HEK293 (cell line): ENCODE measurements at regions of chr4 and their contacts with region 1.

Region 1: GRCh38 chr4:8688041-8688937 is 95.7 kb downstream of the CPZ start:
- H3K4me3 ChIP-seq: no peak overlapping the region
- H3K27ac ChIP-seq: no peak overlapping the region
- H3K4me1 ChIP-seq: no peaks in the 10 kb centered on the region
- CTCF ChIP-seq: no peak

Region 2: DNA sequence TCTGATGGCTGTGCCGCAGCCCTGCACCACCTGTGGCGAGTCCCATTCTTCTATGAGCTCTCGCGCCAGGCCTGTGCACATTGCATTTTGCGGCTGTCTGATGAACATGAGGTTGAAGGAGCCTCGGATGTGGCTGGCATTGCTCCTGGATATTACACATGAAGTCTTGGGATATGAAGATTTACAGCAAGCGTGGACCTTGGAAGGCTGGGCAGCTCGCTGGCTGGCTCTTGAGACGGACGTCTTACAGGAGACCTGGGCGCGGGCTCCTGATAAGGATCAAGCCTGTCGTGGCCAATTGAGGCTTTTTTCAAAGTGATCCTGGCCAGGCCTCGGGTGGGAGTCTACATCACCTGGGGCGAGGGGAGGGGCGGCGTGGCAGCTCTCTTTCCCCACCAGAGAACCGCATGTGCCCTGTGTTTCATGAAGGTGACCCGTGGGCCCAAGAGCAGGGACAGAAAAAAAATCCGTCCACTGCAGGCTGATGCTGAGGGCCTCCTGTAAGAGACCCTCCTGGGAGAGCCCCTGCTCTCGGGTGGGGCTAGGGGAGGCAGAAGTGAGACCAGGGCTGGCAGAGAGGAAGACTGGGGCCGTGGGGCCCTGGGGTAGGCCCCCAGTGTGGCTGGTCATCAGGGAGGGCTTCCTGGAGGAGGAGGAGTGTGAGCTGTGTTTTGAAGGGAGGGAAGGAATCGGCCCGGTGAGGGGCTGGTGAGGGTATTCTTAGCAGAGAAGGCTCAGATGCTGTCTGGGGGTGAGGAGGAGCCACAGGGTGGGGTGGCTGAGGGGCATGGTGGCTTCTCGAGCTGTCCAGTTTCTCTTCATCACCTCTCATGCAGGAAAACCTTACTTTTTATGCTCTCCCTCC is 72.1 kb before region 1 on chr4:
- CTCF ChIA-PET with region 1: no interaction called
- POLR2A ChIA-PET with region 1: no interaction called
- H3K4me3 ChIP-seq: no peak overlapping the region
- H3K27ac ChIP-seq: no peak overlapping the region
- H3K4me1 ChIP-seq: no peaks in the 10 kb centered on the region
- CTCF ChIP-seq: no peak

Region 3: DNA sequence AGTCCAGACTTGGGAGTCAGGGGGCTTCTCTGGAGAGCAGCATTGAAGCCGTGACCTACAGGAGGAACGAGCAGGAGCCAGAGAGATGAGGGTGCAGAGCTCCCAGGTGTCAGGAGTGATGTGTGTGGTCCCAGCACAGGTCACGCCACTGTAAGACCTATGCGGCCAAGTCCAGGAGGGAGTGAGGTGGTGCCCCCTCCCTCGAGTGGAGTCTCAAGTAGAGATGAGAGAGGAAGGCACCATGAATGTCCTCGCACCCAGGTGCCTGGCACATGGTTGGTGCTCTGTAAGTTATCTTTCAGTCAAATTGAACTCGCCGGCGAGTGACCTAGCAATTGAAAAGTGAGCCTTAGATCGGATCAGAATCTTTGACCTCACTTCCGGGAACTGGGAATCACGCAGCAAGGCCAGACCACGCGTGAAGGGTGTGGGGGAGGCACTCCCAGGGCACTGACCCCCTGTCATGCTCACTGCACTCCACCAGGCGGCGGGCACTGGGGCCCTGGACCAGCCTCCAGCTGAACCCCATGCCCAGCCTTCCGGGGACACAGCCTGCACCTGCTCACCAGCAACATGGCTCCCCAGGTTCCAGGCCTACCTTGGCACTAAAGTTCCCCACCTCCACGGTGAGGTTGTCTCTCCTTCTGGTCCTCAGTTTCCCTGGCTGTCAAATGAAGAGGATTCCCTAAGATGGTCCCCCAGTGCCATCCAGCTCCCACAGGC is 56.0 kb after region 1 on chr4:
- CTCF ChIA-PET with region 1: no interaction called
- POLR2A ChIA-PET with region 1: no interaction called
- H3K4me3 ChIP-seq: no peak overlapping the region
- H3K27ac ChIP-seq: no peak overlapping the region
- H3K4me1 ChIP-seq: no peaks in the 10 kb centered on the region
- CTCF ChIP-seq: no peak

Region 4: GRCh38 chr4:8886612-8887406 is 198.5 kb after region 1 on chr4:
- CTCF ChIA-PET with region 1: interaction called, 13 read pairs
- POLR2A ChIA-PET with region 1: no interaction called
- H3K4me3 ChIP-seq: no peak overlapping the region
- H3K27ac ChIP-seq: no peak overlapping the region
- H3K4me1 ChIP-seq: no peaks in the 10 kb centered on the region
- CTCF ChIP-seq: no peak

Region 5: DNA sequence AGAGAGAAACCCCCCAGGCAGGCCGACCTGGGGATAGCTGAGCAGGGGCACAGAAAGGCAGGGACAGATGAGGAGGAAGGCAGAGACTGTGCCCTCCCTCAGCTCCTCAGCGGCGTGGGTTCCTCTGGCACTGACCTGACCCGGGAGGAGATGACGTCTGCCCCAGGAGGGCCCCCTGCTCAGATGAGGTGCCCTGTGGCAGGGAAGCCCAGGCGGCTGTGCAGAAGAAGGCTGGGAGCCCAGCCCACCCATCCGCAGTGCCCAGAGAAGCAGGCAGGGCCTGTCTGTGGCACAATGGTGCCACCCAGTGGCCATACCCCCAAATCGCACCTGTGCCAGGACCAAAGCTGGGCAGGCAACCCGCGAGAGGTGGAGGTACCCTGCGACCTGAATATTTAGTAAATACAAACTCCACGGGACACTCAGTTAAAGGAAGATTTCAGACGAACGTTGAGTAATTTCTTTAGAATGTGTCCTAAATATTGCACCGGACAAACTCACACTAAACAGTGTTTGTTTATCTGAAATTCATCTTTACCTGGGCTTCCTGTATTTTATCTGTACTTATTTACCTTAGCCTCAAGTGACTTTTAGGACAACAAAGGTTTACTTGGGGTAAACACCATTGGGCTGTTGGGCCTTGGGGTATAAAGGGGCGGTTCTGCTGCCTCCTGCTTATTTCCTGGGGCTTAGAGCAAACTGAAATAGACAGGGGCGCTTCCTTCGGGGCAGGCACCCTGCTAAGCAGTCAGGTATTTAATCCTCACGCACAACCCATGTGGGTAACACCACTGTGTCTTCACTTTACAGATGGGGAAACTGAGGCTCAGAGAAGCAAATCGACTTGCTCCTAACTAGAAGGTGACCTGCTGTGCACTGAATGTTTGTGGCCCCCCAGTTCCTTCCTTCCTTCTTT is 229.8 kb after region 1 on chr4:
- CTCF ChIA-PET with region 1: interaction called, 17 read pairs
- POLR2A ChIA-PET with region 1: interaction called, 3 read pairs
- H3K4me3 ChIP-seq: no peak overlapping the region
- H3K27ac ChIP-seq: no peak overlapping the region
- H3K4me1 ChIP-seq: no peaks in the 10 kb centered on the region
- CTCF ChIP-seq: peak; percentile 82